Activated T-helper 1 cell treated with anti-CD3 and anti-CD28 coated beads, Interleukin-12 subunit alpha, Interleukin-12 subunit beta, Interleukin-2, Interleukin-4 antibody, amounts not matched to agents 30 ng/mL and 10 ng/mL and 1 ng/mL, durations not matched to agents 14 hours and 24 hours and 36 hours (primary cell): ENCODE measurements at regions of chr22 and their contacts with region 1.

Region 1: GRCh38 chr22:32103658-32104315 is 55.3 kb downstream of the C22orf42 start:
- DNase-seq: no peak
- H3K4me3 Mint-ChIP-seq: no peak overlapping the region
- H3K27ac Mint-ChIP-seq: no peak overlapping the region
- H3K4me1 Mint-ChIP-seq: no peaks in the 10 kb centered on the region
- H3K27me3 Mint-ChIP-seq: peaks cover 22% of the 10 kb centered on the region

Region 2: DNA sequence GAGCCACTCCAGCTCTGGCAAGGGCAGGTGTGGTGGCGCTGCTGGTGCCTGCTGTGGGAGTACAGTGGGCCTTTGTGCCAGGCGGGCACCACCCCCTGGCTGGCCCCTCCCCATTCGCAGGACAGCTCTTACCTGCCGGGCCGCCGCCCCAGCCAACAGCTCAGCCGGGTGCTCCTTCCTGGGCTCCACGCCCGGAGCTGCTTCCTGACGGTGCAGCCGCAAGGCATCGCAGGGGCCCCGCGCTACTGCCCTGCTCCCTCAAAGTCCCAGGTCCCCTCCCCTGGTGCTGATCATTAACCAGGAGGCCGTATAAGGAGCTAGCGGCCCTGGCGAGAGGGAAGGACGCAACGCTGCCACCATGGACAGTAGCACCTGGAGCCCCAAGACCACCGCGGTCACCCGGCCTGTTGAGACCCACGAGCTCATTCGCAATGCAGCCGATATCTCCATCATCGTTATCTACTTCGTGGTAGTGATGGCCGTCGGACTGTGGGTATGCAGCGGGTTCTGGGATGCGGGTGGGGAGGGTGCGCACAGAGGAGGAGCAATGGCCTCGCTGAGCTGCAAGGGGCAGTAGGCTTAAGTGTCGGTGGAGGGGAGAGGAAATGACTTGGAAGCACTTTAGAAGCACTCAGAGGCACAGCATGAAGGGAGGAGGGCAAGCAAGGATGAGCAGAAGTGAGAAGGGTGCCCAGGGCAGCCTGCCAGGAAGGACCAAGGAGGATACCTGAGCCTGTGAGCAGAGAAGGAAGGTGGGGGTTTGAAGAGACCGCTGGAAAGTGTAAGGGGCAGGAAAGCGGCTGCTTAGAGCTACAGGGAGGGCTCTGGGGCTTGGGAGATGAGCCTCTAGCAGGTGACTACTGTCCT is 60.6 kb before region 1 on chr22 and contains the start of gene SLC5A1:
- intact Hi-C with region 1: no loop called
- DNase-seq: no peak
- H3K4me3 Mint-ChIP-seq: no peak within 1 kb of the TSS
- H3K27ac Mint-ChIP-seq: no peak within 1 kb of the TSS
- H3K4me1 Mint-ChIP-seq: no peaks in the 10 kb centered on the region
- H3K27me3 Mint-ChIP-seq: peaks cover 69% of the 10 kb centered on the region
- total RNA-seq, gene SLC5A1: not detected in 2 replicates

Region 3: DNA sequence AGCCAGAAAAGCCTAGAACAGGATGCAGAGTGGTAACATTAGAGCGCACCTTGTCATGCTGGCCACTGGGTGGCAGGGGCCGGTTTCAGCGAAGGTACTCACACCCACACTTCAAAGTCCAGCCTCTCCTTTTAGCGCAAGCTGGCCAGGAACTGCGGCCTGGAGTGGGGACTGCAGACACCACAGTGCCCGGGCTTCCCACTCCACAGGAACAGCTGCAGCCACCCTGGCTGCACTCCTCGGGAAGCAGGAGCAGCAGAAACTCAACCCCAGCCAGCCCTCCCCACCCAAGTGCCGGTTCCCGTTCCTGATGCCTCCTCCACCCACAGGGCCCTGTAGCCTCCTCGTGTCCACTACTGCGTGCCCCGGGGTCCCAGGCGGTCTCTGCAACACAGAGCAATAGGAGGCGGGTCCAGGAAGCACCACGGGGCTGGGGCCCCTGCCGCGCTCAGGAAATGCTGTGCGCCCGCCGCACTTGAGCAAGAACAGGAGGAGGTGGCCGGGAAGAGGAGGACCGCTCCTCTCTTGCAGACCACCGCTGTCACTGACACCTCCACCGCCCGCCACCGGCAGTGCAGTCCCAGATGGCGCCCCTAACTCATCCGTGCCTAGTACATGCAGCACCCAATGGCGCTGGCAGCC is 98.9 kb after region 1 on chr22:
- intact Hi-C with region 1: loop called (anchors 1 kb)
- DNase-seq: no peak
- H3K4me3 Mint-ChIP-seq: peak overlapping the region; percentile 68
- H3K27ac Mint-ChIP-seq: no peak overlapping the region
- H3K4me1 Mint-ChIP-seq: peaks cover 34% of the 10 kb centered on the region
- H3K27me3 Mint-ChIP-seq: peaks cover 17% of the 10 kb centered on the region

Region 4: DNA sequence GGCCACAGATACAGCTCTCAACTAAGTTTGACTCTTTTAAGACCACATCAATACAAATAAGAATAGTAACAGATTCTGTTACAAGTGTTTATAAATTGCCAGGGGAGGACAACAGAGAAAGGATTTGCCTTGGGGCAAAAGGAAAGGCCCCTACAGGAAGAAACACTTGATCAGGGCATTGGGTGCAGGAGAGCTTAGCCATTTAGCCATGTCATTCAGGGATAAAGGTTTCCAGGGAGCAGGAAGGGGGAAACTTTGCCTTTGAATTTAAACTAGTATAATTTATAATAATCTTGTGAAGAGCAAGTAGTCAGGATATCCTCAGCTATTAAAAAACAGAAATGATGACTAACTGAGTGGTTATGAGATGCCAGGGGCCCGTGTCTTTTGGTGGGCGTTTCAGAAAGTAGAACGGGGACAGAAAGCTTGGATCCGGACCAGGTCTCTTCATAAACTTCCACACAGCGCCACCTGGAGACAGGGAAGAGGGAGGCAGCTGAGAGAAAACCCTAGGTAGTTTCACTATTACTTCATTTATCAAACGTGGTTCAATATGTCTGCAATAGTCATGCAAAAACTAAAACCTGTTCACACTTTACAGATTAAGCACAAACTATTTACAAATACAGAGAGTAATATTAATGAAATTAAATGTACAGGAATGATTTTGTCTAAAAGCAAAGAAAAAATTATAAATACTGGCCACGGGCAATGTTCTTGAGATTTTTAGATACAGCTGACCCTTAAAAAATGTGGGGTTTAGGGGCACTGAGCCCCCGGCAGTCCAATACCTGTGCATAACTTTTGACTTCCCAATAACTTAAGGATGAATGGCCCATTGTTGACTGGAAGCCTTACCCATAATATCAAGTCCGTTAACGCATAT is 162.3 kb after region 1 on chr22:
- intact Hi-C with region 1: loop called (anchors 1 kb)
- DNase-seq: peak; percentile 33
- H3K4me3 Mint-ChIP-seq: no peak overlapping the region
- H3K27ac Mint-ChIP-seq: no peak overlapping the region
- H3K4me1 Mint-ChIP-seq: peaks cover 10% of the 10 kb centered on the region
- H3K27me3 Mint-ChIP-seq: peaks cover 2% of the 10 kb centered on the region